Naive thymus-derived CD4-positive, alpha-beta T cell (primary cell): ENCODE measurements at regions of chr1 and their contacts with region 1.

Region 1: GRCh38 chr1:160098852-160099561 is 588 bp upstream of the IGSF8 start:
- DNase-seq: peak; percentile 94 to 98 (median 96)
- ATAC-seq: peak; percentile 90
- H3K4me3 ChIP-seq: peak overlapping the region; percentile 85
- H3K4me3 Mint-ChIP-seq: peak overlapping the region; percentile 74 to 95 (median 86)
- H3K27ac ChIP-seq: peak overlapping the region; percentile 96
- H3K27ac Mint-ChIP-seq: peak overlapping the region; percentile 88 to 99 (median 97)
- H3K4me1 ChIP-seq: peaks cover 28 to 49% of the 10 kb centered on the region in 2 donors
- H3K4me1 Mint-ChIP-seq: peaks cover 36 to 84% (median 64%) of the 10 kb centered on the region in 7 donors
- H3K27me3 ChIP-seq: no peaks in the 10 kb centered on the region
- H3K27me3 Mint-ChIP-seq: no peaks in the 10 kb centered on the region

Region 2: GRCh38 chr1:159854693-159855192 is 244.3 kb before region 1 on chr1:
- CTCF ChIA-PET with region 1: no interaction called
- POLR2A ChIA-PET with region 1: no interaction called
- intact Hi-C with region 1: no loop called
- DNase-seq: peak; percentile 53 to 72 (median 70)
- ATAC-seq: peak; percentile 91
- H3K4me3 ChIP-seq: peak overlapping the region; percentile 69
- H3K4me3 Mint-ChIP-seq: peak overlapping the region; percentile 80 to 96 (median 91)
- H3K27ac ChIP-seq: peak overlapping the region; percentile 75
- H3K27ac Mint-ChIP-seq: peak overlapping the region in 8 of 9 donors; percentile 67 to 94 (median 88)
- H3K4me1 ChIP-seq: peaks cover 0 to 3% of the 10 kb centered on the region in 2 donors
- H3K4me1 Mint-ChIP-seq: peaks cover 14 to 37% (median 23%) of the 10 kb centered on the region in 7 donors
- H3K27me3 ChIP-seq: no peaks in the 10 kb centered on the region
- H3K27me3 Mint-ChIP-seq: peaks cover 0 to 32% (median 0%) of the 10 kb centered on the region in 5 donors

Region 3: GRCh38 chr1:160070243-160071163 is 28.5 kb before region 1 on chr1:
- CTCF ChIA-PET with region 1: no interaction called
- POLR2A ChIA-PET with region 1: interaction called, 5 read pairs
- intact Hi-C with region 1: loop called in 1 of 2 experiments (anchors 1 kb)
- DNase-seq: peak; percentile 47 to 81 (median 69)
- ATAC-seq: peak; percentile 96
- H3K4me3 ChIP-seq: peak overlapping the region; percentile 85
- H3K4me3 Mint-ChIP-seq: peak overlapping the region; percentile 88 to 100 (median 92)
- H3K27ac ChIP-seq: peak overlapping the region; percentile 51
- H3K27ac Mint-ChIP-seq: peak overlapping the region in 7 of 9 donors; percentile 18 to 78 (median 62)
- H3K4me1 ChIP-seq: peaks cover 3 to 8% of the 10 kb centered on the region in 2 donors
- H3K4me1 Mint-ChIP-seq: peaks cover 9 to 26% (median 16%) of the 10 kb centered on the region in 7 donors
- H3K27me3 ChIP-seq: peaks cover 0 to 6% of the 10 kb centered on the region in 2 donors
- H3K27me3 Mint-ChIP-seq: peaks cover 18 to 60% (median 37%) of the 10 kb centered on the region in 5 donors

Region 4: DNA sequence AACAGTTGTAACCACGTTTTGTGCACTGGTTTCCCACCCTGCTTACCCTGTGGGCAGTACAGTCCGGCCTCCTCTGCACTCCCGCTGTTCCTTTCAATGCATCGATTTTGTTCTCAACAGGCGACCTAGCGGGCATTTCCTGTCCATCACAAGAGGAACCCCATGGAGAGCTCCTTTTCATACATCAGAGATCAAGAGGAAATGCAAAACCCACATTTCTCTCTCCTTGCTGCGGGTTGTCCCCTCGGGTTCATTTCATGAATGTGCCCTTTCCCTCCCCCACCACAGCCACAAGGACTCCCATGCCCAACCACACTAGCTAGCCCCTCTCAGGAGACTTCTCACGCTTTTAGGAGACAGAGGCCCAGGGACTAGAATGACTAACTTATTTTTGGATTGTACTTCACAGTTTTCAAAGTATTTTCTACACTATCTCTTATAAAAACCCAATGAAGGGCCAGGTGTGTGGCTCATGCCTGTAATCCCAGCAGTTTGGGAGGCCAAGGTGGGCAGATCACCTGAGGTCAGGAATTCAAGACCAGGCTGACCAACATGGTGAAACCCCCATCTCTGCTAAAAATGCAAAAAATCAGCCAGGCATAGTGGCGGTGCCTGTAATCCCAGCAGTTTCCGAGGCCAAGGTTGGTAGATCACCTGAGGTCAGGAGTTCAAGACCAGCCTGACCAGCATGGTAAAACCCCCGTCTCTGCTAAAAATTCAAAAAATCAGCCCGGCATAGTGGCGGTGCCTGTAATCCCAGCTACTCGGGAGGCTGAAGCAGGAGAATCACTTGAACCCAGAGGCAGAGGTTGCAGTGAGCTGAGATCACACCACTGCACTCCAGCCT is 70.8 kb after region 1 on chr1:
- CTCF ChIA-PET with region 1: no interaction called
- POLR2A ChIA-PET with region 1: no interaction called
- intact Hi-C with region 1: no loop called
- DNase-seq: no peak
- ATAC-seq: peak; percentile 34
- H3K4me3 ChIP-seq: no peak overlapping the region
- H3K4me3 Mint-ChIP-seq: no peak overlapping the region
- H3K27ac ChIP-seq: no peak overlapping the region
- H3K27ac Mint-ChIP-seq: peak overlapping the region in 1 of 9 donors; percentile 9
- H3K4me1 ChIP-seq: no peaks in the 10 kb centered on the region
- H3K4me1 Mint-ChIP-seq: peaks cover 6 to 12% (median 9%) of the 10 kb centered on the region in 7 donors
- H3K27me3 ChIP-seq: no peaks in the 10 kb centered on the region
- H3K27me3 Mint-ChIP-seq: peaks cover 10 to 37% (median 13%) of the 10 kb centered on the region in 5 donors

Region 5: GRCh38 chr1:160205242-160206035 is 106.4 kb after region 1 on chr1 and contains the start of gene PEA15:
- CTCF ChIA-PET with region 1: no interaction called
- POLR2A ChIA-PET with region 1: interaction called, 3 read pairs
- intact Hi-C with region 1: loop called (anchors 2 kb)
- DNase-seq: peak; percentile 43 to 81 (median 49)
- ATAC-seq: peak; percentile 81
- H3K4me3 ChIP-seq: peak within 1 kb of the TSS; percentile 77
- H3K4me3 Mint-ChIP-seq: peak within 1 kb of the TSS; percentile 78 to 94 (median 88)
- H3K27ac ChIP-seq: peak within 1 kb of the TSS; percentile 74
- H3K27ac Mint-ChIP-seq: peak within 1 kb of the TSS; percentile 75 to 92 (median 88)
- H3K4me1 ChIP-seq: peaks cover 12 to 16% of the 10 kb centered on the region in 2 donors
- H3K4me1 Mint-ChIP-seq: peaks cover 31 to 49% (median 37%) of the 10 kb centered on the region in 7 donors
- H3K27me3 ChIP-seq: no peaks in the 10 kb centered on the region
- H3K27me3 Mint-ChIP-seq: no peaks in the 10 kb centered on the region
- total RNA-seq, gene PEA15: 11.5 to 38.6 (median 13.4) TPM

Region 6: DNA sequence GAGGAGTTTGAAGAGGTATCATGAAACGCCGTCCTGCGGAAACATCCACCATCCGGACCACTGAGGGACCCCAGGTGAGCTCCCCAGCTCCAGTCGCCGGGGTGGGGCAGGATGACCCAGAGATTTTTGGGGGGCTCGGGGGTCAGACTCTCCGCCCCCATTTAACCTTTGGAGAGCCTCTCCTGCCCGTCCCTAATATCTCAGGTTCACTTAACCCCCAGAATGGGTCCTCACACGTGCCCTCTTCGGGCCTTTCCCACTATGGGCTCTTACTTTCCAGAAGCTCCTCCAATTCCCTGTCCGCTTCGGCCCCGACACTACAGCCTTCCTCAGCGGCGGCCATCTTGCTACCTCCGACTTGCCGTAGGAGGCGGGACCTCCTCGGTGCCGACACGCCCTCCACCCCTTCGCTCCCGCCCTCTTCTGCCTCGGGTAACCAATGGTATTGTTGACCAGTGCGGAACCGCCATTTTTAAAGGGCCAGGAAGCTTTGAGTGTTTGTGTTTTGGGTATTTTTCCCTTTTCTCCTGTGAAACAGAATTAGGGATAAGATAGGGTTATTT is 185.9 kb after region 1 on chr1 and contains the start of gene PEX19:
- CTCF ChIA-PET with region 1: interaction called, 9 read pairs
- POLR2A ChIA-PET with region 1: interaction called, 12 read pairs
- intact Hi-C with region 1: loop called (anchors 1 kb)
- DNase-seq: peak; percentile 85 to 95 (median 92)
- ATAC-seq: peak; percentile 100
- H3K4me3 ChIP-seq: peak within 1 kb of the TSS; percentile 95
- H3K4me3 Mint-ChIP-seq: peak within 1 kb of the TSS; percentile 95 to 100 (median 98)
- H3K27ac ChIP-seq: peak within 1 kb of the TSS; percentile 89
- H3K27ac Mint-ChIP-seq: peak within 1 kb of the TSS; percentile 93 to 99 (median 94)
- H3K4me1 ChIP-seq: peaks cover 11 to 16% of the 10 kb centered on the region in 2 donors
- H3K4me1 Mint-ChIP-seq: peaks cover 16 to 41% (median 31%) of the 10 kb centered on the region in 7 donors
- H3K27me3 ChIP-seq: no peaks in the 10 kb centered on the region
- H3K27me3 Mint-ChIP-seq: no peaks in the 10 kb centered on the region
- total RNA-seq, gene PEX19: 37.9 to 66.1 (median 49.2) TPM

Region 7: GRCh38 chr1:160376525-160377131 is 277.6 kb after region 1 on chr1:
- CTCF ChIA-PET with region 1: interaction called, 4 read pairs
- POLR2A ChIA-PET with region 1: no interaction called
- intact Hi-C with region 1: loop called (anchors 1 kb)
- DNase-seq: peak in 6 of 9 donors; percentile 21 to 45 (median 36)
- ATAC-seq: peak; percentile 73
- H3K4me3 ChIP-seq: no peak overlapping the region
- H3K4me3 Mint-ChIP-seq: peak overlapping the region in 5 of 10 donors; percentile 5 to 54 (median 15)
- H3K27ac ChIP-seq: no peak overlapping the region
- H3K27ac Mint-ChIP-seq: peak overlapping the region in 2 of 9 donors; percentile 4 to 37
- H3K4me1 ChIP-seq: peaks cover 8 to 11% of the 10 kb centered on the region in 2 donors
- H3K4me1 Mint-ChIP-seq: peaks cover 7 to 19% (median 14%) of the 10 kb centered on the region in 7 donors
- H3K27me3 ChIP-seq: no peaks in the 10 kb centered on the region
- H3K27me3 Mint-ChIP-seq: peaks cover 0 to 7% (median 0%) of the 10 kb centered on the region in 5 donors